ENCODE measurements at regions of chr16 and their contacts with region 1.

Region 1: DNA sequence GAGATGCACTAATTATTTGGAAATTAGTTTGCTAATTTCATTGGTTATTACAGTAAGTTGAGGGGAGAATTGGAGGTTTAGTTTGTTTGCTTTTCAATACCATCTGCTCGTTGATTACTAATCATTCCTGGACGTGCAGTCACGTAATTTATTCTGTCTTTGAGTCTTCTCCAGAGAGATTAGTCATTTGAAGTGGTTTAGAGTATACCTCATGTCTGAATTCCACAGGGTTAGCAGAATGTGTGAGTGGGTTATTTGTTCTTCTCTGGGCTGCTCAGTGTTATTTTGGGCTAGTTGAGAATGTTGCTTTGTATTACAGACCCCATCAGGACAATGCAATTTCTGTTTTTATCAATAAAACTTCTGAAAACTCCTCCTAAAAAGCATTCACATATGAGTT is 265.0 kb downstream of the RBFOX1 start:
- DNase-seq: no peak
- ATAC-seq: no peak

Region 2: DNA sequence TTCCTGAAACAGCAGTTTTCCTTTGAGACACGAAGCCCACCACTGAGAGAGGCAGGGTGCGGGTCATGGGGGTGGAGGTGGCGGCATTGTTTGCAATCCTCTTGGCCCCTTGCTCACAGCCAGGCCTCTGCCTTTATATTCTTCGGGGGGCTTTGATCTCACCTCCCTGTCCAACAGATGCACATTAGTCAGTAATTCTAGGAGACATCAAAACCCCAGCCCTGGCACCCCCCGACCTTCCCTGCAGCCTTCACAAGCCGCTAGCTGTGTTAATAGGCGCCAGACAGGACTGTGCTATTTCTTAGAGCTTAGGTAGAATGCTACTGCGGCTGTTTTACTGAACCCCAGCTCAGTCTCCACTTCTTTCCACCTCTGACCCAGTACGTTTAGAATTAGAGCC is 52.4 kb before region 1 on chr16:
- intact Hi-C with region 1: loop called (anchors 5 kb)
- DNase-seq: no peak
- ATAC-seq: no peak

Region 3: GRCh38 chr16:7561908-7562405 is 35.7 kb before region 1 on chr16:
- intact Hi-C with region 1: no loop called
- DNase-seq: no peak
- ATAC-seq: no peak